Activated CD4-positive, alpha-beta T cell treated with anti-CD3 and anti-CD28 coated beads, Interleukin-2, amount 10 ng/mL, durations not matched to agents 24 days and 14 days (primary cell): ENCODE measurements at regions of chrX and their contacts with region 1.

Region 1: GRCh38 chrX:79161655-79162054 is 17.2 kb downstream of the GPR174 start:
- DNase-seq: peak; percentile 85
- H3K4me3 Mint-ChIP-seq: peak overlapping the region; percentile 82
- H3K27ac Mint-ChIP-seq: peak overlapping the region; percentile 98
- H3K4me1 Mint-ChIP-seq: peaks cover 40% of the 10 kb centered on the region
- H3K27me3 Mint-ChIP-seq: no peaks in the 10 kb centered on the region

Region 2: GRCh38 chrX:78321809-78322208 is 839.8 kb before region 1 on chrX:
- intact Hi-C with region 1: loop called (anchors 5 kb)
- DNase-seq: peak; percentile 83
- H3K4me3 Mint-ChIP-seq: peak overlapping the region; percentile 86
- H3K27ac Mint-ChIP-seq: peak overlapping the region; percentile 96
- H3K4me1 Mint-ChIP-seq: peaks cover 34% of the 10 kb centered on the region
- H3K27me3 Mint-ChIP-seq: no peaks in the 10 kb centered on the region

Region 3: DNA sequence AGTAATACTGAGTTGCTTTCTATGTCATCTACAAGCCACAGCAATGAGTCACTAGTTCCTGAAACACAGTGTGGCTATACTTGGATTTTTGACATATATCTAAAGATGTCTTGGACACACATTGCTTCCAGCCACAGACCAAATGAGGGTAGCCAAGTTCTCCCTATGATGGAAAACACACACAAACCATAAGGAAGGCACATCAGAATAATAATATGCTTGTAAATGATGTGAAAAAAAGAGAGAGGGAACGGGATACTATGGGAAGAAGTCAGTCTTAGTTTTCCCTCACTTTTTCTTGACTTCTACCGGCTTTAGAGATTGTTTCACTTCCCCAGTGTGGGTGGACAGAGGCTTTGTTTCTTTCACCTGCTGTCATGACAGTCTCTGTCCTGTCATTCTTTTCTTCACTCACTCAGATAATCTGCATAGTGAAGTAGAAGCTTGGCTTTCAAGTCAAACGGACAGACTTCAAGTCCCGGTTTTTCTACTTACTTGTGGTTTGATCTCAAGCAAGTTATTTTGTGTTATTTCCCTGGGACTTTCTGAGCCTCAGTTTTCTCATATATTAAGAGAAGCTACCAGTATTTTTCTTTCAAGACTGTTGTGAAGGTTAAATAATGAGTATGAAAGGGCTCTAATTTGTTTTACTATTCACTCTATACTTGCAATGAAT is 181.7 kb before region 1 on chrX:
- intact Hi-C with region 1: loop called (anchors 1 kb)
- DNase-seq: peak; percentile 58
- H3K4me3 Mint-ChIP-seq: peak overlapping the region; percentile 79
- H3K27ac Mint-ChIP-seq: peak overlapping the region; percentile 100
- H3K4me1 Mint-ChIP-seq: peaks cover 19% of the 10 kb centered on the region
- H3K27me3 Mint-ChIP-seq: no peaks in the 10 kb centered on the region

Region 4: GRCh38 chrX:79182616-79183015 is 21.0 kb after region 1 on chrX:
- intact Hi-C with region 1: loop called (anchors 1 kb)
- DNase-seq: peak; percentile 57
- H3K4me3 Mint-ChIP-seq: peak overlapping the region; percentile 60
- H3K27ac Mint-ChIP-seq: peak overlapping the region; percentile 88
- H3K4me1 Mint-ChIP-seq: peaks cover 26% of the 10 kb centered on the region
- H3K27me3 Mint-ChIP-seq: no peaks in the 10 kb centered on the region